Activated CD8-positive, alpha-beta T cell treated with anti-CD3 and anti-CD28 coated beads, Interleukin-2, amount 10 ng/mL, durations not matched to agents 7 days and 5 days (primary cell): ENCODE measurements at regions of chr20 and their contacts with region 1.

Region 1: DNA sequence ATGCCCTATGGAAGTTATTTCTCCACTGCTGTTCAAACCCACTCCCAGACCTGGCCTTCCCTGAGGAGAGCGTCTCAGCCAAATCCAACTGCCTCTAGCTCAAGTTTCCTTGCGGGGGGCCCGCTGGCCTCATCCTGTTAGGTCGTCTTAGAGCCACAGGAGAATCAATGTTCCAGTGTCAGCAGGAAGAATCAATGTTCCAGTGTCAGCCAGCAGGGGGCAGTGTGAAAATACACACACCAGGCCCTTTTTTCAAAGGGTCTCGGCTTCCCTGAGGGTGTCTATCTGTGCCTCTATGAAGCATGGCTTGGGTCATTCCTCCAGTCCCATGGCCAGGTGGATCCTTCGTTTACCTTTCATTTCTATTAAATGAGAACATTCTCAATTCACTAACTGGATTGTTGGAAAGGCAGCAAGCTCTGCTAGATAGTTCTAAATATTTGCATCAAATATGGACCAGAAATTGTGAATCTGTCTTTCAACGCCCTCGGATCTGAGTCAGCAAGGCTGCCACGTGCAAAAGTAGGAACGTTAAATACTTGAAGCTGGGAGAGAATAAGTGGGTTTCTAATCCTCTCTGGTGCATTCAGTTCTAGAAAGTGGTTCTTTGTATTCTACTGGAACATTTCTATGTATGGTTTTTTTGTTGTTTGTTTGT is 19.2 kb downstream of the PRND start:
- DNase-seq: peak; percentile 78
- ATAC-seq: peak; percentile 39
- H3K4me3 Mint-ChIP-seq: no peak overlapping the region
- H3K27ac Mint-ChIP-seq: no peak overlapping the region
- H3K4me1 Mint-ChIP-seq: no peaks in the 10 kb centered on the region
- H3K27me3 Mint-ChIP-seq: peaks cover 21% of the 10 kb centered on the region

Region 2: DNA sequence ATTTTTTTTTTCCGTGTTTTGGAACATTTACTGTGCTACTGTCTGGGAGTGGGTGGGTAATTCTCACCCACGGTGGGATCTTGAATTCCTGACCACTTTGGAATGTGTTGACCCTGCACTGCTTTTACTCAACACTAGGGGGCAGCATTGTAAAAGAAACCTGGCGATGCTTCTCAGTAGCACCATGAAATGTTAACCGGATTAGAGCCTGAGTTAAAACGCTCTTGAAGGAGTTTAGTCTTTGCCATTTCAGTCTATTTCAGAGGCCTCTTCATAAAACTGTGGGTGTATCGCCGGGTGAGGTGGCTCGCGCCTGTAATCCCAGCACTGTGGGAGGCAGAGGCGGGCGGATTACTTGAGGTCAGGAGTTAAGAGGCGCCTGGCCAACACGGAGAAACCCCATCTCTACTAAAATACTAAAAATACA is 133.6 kb before region 1 on chr20:
- CTCF ChIA-PET with region 1: interaction called, 18 read pairs
- POLR2A ChIA-PET with region 1: no interaction called
- DNase-seq: peak; percentile 70
- ATAC-seq: peak; percentile 80
- H3K4me3 Mint-ChIP-seq: no peak overlapping the region
- H3K27ac Mint-ChIP-seq: no peak overlapping the region
- H3K4me1 Mint-ChIP-seq: no peaks in the 10 kb centered on the region
- H3K27me3 Mint-ChIP-seq: peaks cover 20% of the 10 kb centered on the region